CD4-positive, alpha-beta memory T cell (primary cell): ENCODE measurements at regions of chr14 and their contacts with region 1.

Region 1: GRCh38 chr14:105020815-105021655 is at the start of gene CDCA4:
- DNase-seq: peak; percentile 94 to 98 (median 97)
- H3K4me3 ChIP-seq: peak within 1 kb of the TSS; percentile 69 to 71
- H3K4me3 Mint-ChIP-seq: peak within 1 kb of the TSS; percentile 92 to 98 (median 94)
- H3K27ac ChIP-seq: peak within 1 kb of the TSS; percentile 75
- H3K27ac Mint-ChIP-seq: peak within 1 kb of the TSS; percentile 94 to 97 (median 96)
- H3K4me1 ChIP-seq: peaks cover 72% of the 10 kb centered on the region
- H3K4me1 Mint-ChIP-seq: peaks cover 29 to 84% (median 57%) of the 10 kb centered on the region in 4 donors
- H3K27me3 ChIP-seq: no peaks in the 10 kb centered on the region
- H3K27me3 Mint-ChIP-seq: peaks cover 0 to 1% of the 10 kb centered on the region in 2 donors
- total RNA-seq, gene CDCA4: 17.1 to 19.0 TPM

Region 2: GRCh38 chr14:104752735-104753531 is 268.1 kb before region 1 on chr14 and contains the start of gene SIVA1:
- CTCF ChIA-PET with region 1: no interaction called
- POLR2A ChIA-PET with region 1: interaction called, 3 read pairs
- intact Hi-C with region 1: loop called (anchors 5 kb)
- DNase-seq: peak; percentile 99
- H3K4me3 ChIP-seq: peak within 1 kb of the TSS; percentile 57 to 93
- H3K4me3 Mint-ChIP-seq: peak within 1 kb of the TSS; percentile 88 to 96 (median 92)
- H3K27ac ChIP-seq: peak within 1 kb of the TSS; percentile 79
- H3K27ac Mint-ChIP-seq: peak within 1 kb of the TSS; percentile 91 to 95 (median 94)
- H3K4me1 ChIP-seq: peaks cover 25% of the 10 kb centered on the region
- H3K4me1 Mint-ChIP-seq: peaks cover 16 to 41% (median 29%) of the 10 kb centered on the region in 4 donors
- H3K27me3 ChIP-seq: no peaks in the 10 kb centered on the region
- H3K27me3 Mint-ChIP-seq: no peaks in the 10 kb centered on the region
- total RNA-seq, gene SIVA1: 69.3 to 80.2 TPM

Region 3: GRCh38 chr14:104968153-104968527 is 52.9 kb before region 1 on chr14:
- CTCF ChIA-PET with region 1: no interaction called
- POLR2A ChIA-PET with region 1: no interaction called
- intact Hi-C with region 1: no loop called
- DNase-seq: no peak
- H3K4me3 ChIP-seq: no peak overlapping the region
- H3K4me3 Mint-ChIP-seq: no peak overlapping the region
- H3K27ac ChIP-seq: no peak overlapping the region
- H3K27ac Mint-ChIP-seq: no peak overlapping the region
- H3K4me1 ChIP-seq: peaks cover 4% of the 10 kb centered on the region
- H3K4me1 Mint-ChIP-seq: no peaks in the 10 kb centered on the region
- H3K27me3 ChIP-seq: peaks cover 6% of the 10 kb centered on the region
- H3K27me3 Mint-ChIP-seq: peaks cover 4 to 11% of the 10 kb centered on the region in 2 donors

Region 4: DNA sequence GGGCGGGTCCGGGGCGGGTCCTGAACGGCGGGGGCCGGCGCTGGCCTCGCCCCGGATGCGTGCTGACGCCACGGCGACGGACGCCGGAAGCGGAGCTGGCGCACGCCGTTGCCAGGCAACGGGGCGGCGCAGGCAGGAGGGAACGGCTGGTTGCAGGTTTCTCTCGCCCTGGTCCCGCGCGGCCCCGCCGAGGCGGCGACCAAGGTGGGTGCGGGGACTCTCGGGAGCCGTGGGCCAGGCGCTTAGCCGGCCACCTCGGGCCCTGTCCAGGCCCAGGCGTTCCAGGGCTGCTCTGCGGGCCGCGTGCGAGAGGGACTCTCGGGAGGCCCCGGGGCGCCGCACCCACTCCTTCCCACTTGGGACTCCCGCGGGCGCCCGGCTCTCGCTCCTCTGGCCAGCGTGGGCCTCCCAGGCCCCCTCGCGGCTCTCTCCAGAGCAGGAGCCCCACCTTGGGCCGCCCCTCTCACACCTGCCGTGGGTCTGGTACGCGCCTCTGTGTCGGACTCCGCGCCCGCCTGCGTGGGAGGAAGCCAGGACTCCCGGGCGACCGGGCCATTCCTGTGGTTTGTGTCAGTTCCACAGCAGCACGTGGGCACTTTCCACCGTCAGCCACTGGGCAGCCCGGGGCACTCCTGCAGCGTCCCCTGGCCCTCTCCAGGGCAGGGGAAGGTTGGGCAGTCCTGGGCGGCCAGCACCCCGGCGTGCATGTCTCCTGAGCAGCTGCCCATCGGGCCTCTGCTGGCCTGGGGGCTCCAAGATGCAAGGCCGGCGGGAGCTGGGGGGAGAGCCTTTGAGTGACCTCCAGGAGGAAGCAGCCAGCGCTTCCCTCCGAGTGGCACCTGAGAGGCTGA is 35.1 kb before region 1 on chr14 and contains the start of gene CLBA1:
- CTCF ChIA-PET with region 1: interaction called, 13 read pairs
- POLR2A ChIA-PET with region 1: interaction called, 32 read pairs
- intact Hi-C with region 1: loop called (anchors 1 kb)
- DNase-seq: peak; percentile 86 to 92 (median 90)
- H3K4me3 ChIP-seq: peak within 1 kb of the TSS in 1 of 2 donors; percentile 52
- H3K4me3 Mint-ChIP-seq: peak within 1 kb of the TSS; percentile 67 to 83 (median 79)
- H3K27ac ChIP-seq: peak within 1 kb of the TSS; percentile 61
- H3K27ac Mint-ChIP-seq: peak within 1 kb of the TSS; percentile 81 to 92 (median 88)
- H3K4me1 ChIP-seq: peaks cover 8% of the 10 kb centered on the region
- H3K4me1 Mint-ChIP-seq: peaks cover 0 to 10% (median 3%) of the 10 kb centered on the region in 4 donors
- H3K27me3 ChIP-seq: no peaks in the 10 kb centered on the region
- H3K27me3 Mint-ChIP-seq: peaks cover 2 to 3% of the 10 kb centered on the region in 2 donors
- total RNA-seq, gene CLBA1: 1.3 to 1.6 TPM

Region 5: DNA sequence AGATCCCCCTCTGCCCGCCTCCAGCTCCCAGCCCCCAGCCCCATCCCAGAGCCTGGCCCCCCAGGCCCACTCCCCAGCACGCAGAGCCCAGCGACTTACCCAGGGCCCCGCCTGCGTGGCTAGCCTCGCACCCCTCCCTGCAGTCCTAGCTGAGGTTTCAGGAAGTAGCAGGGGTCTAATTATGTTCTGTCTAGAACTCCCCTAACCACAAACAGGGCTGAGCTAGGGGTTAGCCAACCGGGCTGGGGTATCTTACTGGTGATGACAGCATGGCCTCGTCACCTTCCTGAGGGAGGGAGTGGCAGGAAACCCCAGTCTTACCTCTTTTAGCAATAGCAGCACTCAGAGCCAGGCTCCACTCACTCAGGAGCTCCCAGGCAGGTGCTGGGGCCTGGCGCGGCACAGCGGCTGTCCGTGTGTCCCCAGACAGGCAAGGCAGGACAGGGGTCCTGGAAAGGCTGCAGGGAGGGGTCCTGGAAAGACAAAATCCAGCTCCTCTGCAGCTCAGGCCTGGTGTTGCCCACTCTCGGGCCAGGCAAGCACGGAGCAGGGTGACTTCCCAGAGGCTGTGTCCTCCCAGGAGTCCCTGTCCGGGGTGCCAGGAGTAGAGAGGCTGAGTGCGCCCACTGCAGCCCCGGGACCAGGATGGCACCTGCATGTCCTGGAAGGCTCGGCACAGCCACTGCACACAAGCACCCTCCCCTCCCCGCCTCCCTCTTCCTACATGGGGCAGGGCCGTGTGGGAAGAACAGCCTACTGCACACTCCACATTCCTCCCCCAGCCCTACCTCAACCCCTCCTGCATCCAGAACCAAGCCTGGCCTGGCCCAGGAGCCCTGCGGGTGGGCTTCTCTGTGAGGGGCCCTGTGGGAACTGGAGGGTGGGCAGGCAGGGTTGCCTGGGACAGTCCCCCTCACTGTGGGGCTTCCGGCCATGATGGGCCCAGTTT is 44.5 kb after region 1 on chr14 and contains the start of gene GPR132:
- CTCF ChIA-PET with region 1: interaction called, 4 read pairs
- POLR2A ChIA-PET with region 1: interaction called, 70 read pairs
- intact Hi-C with region 1: loop called (anchors 1 kb)
- DNase-seq: peak; percentile 93 to 99 (median 96)
- H3K4me3 ChIP-seq: peak within 1 kb of the TSS; percentile 89 to 97
- H3K4me3 Mint-ChIP-seq: peak within 1 kb of the TSS; percentile 89 to 97 (median 95)
- H3K27ac ChIP-seq: peak within 1 kb of the TSS; percentile 93
- H3K27ac Mint-ChIP-seq: peak within 1 kb of the TSS; percentile 92 to 100 (median 99)
- H3K4me1 ChIP-seq: peaks cover 91% of the 10 kb centered on the region
- H3K4me1 Mint-ChIP-seq: peaks cover 34 to 85% (median 62%) of the 10 kb centered on the region in 4 donors
- H3K27me3 ChIP-seq: no peaks in the 10 kb centered on the region
- H3K27me3 Mint-ChIP-seq: no peaks in the 10 kb centered on the region
- total RNA-seq, gene GPR132: 47.3 to 49.2 TPM

Region 6: DNA sequence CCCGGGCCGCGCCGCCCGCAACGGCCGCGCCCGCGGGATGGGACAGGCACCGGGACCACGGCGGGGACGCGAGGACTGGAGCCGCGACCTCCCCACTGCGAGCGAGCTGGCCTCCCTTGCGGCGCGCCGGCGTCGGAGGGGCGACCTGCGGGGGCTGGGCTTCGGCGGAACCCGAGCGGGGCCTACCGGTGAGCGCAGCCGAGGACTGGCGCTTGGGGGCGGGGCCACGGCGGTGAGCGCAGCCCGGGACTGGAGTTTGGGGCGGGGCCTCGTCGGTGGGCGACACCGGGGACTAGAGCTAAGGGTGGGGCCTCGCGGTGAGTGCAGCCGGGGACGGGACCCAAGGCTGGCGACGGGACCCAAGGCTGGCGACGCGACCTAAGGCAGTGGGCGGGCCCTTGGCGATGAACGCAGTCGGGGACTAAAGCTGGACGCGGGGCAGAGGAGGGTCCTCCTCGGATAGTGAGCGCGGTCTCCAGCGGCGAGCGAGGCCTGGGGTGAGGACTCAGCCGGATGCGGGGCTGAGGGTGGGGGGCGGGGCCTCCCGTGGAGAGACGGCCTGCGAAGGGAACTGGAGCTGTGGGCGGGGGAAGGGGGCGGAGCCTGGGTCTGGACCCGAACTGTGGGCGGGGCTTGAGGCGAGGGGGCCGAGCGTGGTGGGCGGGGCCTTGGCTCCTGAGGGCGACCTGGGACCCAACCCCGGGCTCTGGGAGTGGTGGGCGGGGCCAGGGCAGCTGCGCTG is 279.9 kb after region 1 on chr14 and contains the start of gene BRF1:
- CTCF ChIA-PET with region 1: no interaction called
- POLR2A ChIA-PET with region 1: interaction called, 8 read pairs
- intact Hi-C with region 1: loop called (anchors 1 kb)
- DNase-seq: peak; percentile 97 to 99 (median 98)
- H3K4me3 ChIP-seq: peak within 1 kb of the TSS; percentile 65 to 80
- H3K4me3 Mint-ChIP-seq: peak within 1 kb of the TSS; percentile 88 to 95 (median 90)
- H3K27ac ChIP-seq: peak within 1 kb of the TSS; percentile 63
- H3K27ac Mint-ChIP-seq: peak within 1 kb of the TSS; percentile 80 to 98 (median 95)
- H3K4me1 ChIP-seq: peaks cover 23% of the 10 kb centered on the region
- H3K4me1 Mint-ChIP-seq: peaks cover 22 to 48% (median 30%) of the 10 kb centered on the region in 4 donors
- H3K27me3 ChIP-seq: no peaks in the 10 kb centered on the region
- H3K27me3 Mint-ChIP-seq: no peaks in the 10 kb centered on the region
- total RNA-seq, gene BRF1: 49.7 to 56.0 TPM